ENCODE measurements at regions of chr11 and their contacts with region 1.

Region 1: GRCh38 chr11:1389103-1389931 is 417 bp upstream of the BRSK2 start:
- DNase-seq: peak; percentile 88 to 94 (median 94)
- H3K4me3 ChIP-seq: peak overlapping the region; percentile 17 to 64 (median 29)
- H3K4me3 Mint-ChIP-seq: peak overlapping the region; percentile 43 to 76
- H3K27ac ChIP-seq: no peak overlapping the region
- H3K27ac Mint-ChIP-seq: no peak overlapping the region
- H3K4me1 ChIP-seq: peaks cover 6 to 11% of the 10 kb centered on the region in 2 donors
- H3K4me1 Mint-ChIP-seq: peaks cover 5% of the 10 kb centered on the region
- H3K27me3 ChIP-seq: peaks cover 32 to 67% of the 10 kb centered on the region in 2 donors
- H3K27me3 Mint-ChIP-seq: peaks cover 65 to 80% (median 66%) of the 10 kb centered on the region in 3 donors
- CTCF ChIP-seq: no peak

Region 2: GRCh38 chr11:695538-696248 is 693.6 kb before region 1 on chr11 and contains the start of gene TMEM80:
- intact Hi-C with region 1: loop called in 1 of 2 experiments (anchors 10 kb)
- DNase-seq: peak; percentile 97 to 98 (median 97)
- H3K4me3 ChIP-seq: peak within 1 kb of the TSS; percentile 73 to 87 (median 83)
- H3K4me3 Mint-ChIP-seq: peak within 1 kb of the TSS; percentile 83 to 89
- H3K27ac ChIP-seq: peak within 1 kb of the TSS; percentile 95 to 98
- H3K27ac Mint-ChIP-seq: peak within 1 kb of the TSS; percentile 93 to 97 (median 96)
- H3K4me1 ChIP-seq: peaks cover 46 to 52% of the 10 kb centered on the region in 2 donors
- H3K4me1 Mint-ChIP-seq: peaks cover 48% of the 10 kb centered on the region
- H3K27me3 ChIP-seq: no peaks in the 10 kb centered on the region
- H3K27me3 Mint-ChIP-seq: peaks cover 0 to 7% (median 5%) of the 10 kb centered on the region in 3 donors
- CTCF ChIP-seq: no peak
- polyA plus RNA-seq, gene TMEM80: 31.6 to 69.4 (median 37.3) TPM

Region 3: GRCh38 chr11:1181867-1182535 is 207.3 kb before region 1 on chr11:
- intact Hi-C with region 1: no loop called
- DNase-seq: no peak
- H3K4me3 ChIP-seq: no peak overlapping the region
- H3K4me3 Mint-ChIP-seq: no peak overlapping the region
- H3K27ac ChIP-seq: no peak overlapping the region
- H3K27ac Mint-ChIP-seq: peak overlapping the region in 1 of 7 donors; percentile 31
- H3K4me1 ChIP-seq: no peaks in the 10 kb centered on the region
- H3K4me1 Mint-ChIP-seq: no peaks in the 10 kb centered on the region
- H3K27me3 ChIP-seq: no peaks in the 10 kb centered on the region
- H3K27me3 Mint-ChIP-seq: peaks cover 0 to 2% (median 0%) of the 10 kb centered on the region in 3 donors
- CTCF ChIP-seq: no peak

Region 4: DNA sequence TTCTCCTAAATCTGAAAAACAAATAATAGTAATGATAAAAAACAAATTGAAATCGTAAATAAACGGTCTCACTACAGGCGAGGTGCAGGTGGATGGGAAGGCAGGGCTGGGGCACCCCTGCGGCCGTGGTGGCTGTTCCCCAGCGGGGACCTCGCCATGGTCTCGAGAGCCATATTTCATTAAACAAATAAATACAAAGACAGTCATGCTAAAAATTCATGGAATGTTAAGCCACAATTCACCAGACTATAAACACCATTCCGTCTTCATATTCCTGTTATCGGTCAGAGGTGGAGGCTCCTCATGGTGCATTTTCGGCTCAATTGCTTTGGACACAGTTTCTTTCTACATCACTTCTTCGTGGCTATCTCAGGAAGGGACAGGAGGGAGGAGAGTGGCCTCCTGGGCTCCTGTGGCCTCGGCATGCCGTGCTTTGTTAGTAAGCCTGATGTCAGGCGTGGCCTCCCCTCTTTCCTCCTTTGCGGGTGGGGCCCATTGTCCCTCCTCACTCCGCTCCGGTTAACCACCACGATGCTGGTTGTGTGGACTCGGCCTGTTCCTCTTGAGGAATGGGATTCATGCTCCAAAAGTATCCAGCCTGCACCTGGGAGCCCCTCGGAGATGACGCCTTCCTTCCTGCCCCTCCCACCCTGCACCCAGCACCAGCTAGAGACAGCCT is 15.6 kb before region 1 on chr11:
- intact Hi-C with region 1: no loop called
- DNase-seq: no peak
- H3K4me3 ChIP-seq: no peak overlapping the region
- H3K4me3 Mint-ChIP-seq: no peak overlapping the region
- H3K27ac ChIP-seq: no peak overlapping the region
- H3K27ac Mint-ChIP-seq: no peak overlapping the region
- H3K4me1 ChIP-seq: no peaks in the 10 kb centered on the region
- H3K4me1 Mint-ChIP-seq: no peaks in the 10 kb centered on the region
- H3K27me3 ChIP-seq: peaks cover 0 to 2% of the 10 kb centered on the region in 2 donors
- H3K27me3 Mint-ChIP-seq: peaks cover 8 to 10% (median 9%) of the 10 kb centered on the region in 3 donors
- CTCF ChIP-seq: no peak

Region 5: GRCh38 chr11:1442163-1442562 is 52.8 kb after region 1 on chr11:
- intact Hi-C with region 1: no loop called
- DNase-seq: no peak
- H3K4me3 ChIP-seq: no peak overlapping the region
- H3K4me3 Mint-ChIP-seq: no peak overlapping the region
- H3K27ac ChIP-seq: no peak overlapping the region
- H3K27ac Mint-ChIP-seq: no peak overlapping the region
- H3K4me1 ChIP-seq: no peaks in the 10 kb centered on the region
- H3K4me1 Mint-ChIP-seq: no peaks in the 10 kb centered on the region
- H3K27me3 ChIP-seq: no peaks in the 10 kb centered on the region
- H3K27me3 Mint-ChIP-seq: peaks cover 0 to 2% (median 2%) of the 10 kb centered on the region in 3 donors
- CTCF ChIP-seq: no peak

Region 6: GRCh38 chr11:1502954-1503707 is 113.8 kb after region 1 on chr11:
- intact Hi-C with region 1: no loop called
- DNase-seq: no peak
- H3K4me3 ChIP-seq: no peak overlapping the region
- H3K4me3 Mint-ChIP-seq: no peak overlapping the region
- H3K27ac ChIP-seq: no peak overlapping the region
- H3K27ac Mint-ChIP-seq: peak overlapping the region in 1 of 7 donors; percentile 40
- H3K4me1 ChIP-seq: no peaks in the 10 kb centered on the region
- H3K4me1 Mint-ChIP-seq: peaks cover 12% of the 10 kb centered on the region
- H3K27me3 ChIP-seq: no peaks in the 10 kb centered on the region
- H3K27me3 Mint-ChIP-seq: peaks cover 0 to 6% (median 2%) of the 10 kb centered on the region in 3 donors
- CTCF ChIP-seq: no peak